GM18951 (cell line): ENCODE measurements at regions of chr7 and their contacts with region 1.

Region 1: GRCh38 chr7:98163704-98164494 is 47.3 kb upstream of the BHLHA15 start:
- POLR2A ChIP-seq: no peak

Region 2: DNA sequence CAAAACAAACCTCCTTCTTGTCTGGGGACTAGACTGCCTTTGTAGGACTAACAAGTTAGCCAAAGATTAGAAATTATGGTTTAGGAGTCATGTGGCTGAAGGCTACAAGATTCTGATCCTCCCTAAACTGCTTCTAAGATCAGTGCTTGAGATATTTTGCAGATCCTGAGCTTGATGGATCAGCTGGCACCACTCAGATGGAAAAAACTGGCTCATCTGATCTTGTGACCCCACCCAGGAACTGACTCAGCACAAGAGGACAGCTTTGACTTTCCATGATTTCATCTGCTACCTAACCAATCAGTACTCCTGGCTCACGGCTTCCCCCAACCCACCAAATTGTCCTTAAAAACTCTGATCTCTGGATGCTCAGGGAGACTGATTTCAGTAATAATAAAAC is 703.5 kb before region 1 on chr7:
- in situ Hi-C with region 1: no loop called
- POLR2A ChIP-seq: no peak

Region 3: GRCh38 chr7:98021588-98022351 is 142.1 kb before region 1 on chr7:
- in situ Hi-C with region 1: loop called (anchors 5 kb)
- POLR2A ChIP-seq: no peak

Region 4: DNA sequence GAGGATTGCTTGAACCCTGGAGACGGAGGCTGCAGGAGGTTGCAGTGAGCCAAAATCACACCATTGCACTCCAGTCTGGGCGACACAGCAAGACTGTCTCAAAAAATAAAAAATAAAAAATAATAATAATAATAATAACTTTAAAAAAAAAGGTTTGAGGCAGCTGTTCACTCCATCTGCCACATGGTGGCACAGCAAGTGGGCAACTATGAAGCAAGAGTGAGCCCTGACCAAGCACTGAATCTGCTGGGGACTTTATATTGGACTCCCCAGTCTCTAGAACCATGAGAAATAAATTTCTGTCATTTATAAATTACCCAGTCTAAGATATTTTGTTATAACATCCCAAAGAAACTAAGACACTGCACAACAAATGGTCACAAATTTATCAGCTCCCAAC is 102.9 kb after region 1 on chr7:
- in situ Hi-C with region 1: no loop called
- POLR2A ChIP-seq: no peak

Region 5: DNA sequence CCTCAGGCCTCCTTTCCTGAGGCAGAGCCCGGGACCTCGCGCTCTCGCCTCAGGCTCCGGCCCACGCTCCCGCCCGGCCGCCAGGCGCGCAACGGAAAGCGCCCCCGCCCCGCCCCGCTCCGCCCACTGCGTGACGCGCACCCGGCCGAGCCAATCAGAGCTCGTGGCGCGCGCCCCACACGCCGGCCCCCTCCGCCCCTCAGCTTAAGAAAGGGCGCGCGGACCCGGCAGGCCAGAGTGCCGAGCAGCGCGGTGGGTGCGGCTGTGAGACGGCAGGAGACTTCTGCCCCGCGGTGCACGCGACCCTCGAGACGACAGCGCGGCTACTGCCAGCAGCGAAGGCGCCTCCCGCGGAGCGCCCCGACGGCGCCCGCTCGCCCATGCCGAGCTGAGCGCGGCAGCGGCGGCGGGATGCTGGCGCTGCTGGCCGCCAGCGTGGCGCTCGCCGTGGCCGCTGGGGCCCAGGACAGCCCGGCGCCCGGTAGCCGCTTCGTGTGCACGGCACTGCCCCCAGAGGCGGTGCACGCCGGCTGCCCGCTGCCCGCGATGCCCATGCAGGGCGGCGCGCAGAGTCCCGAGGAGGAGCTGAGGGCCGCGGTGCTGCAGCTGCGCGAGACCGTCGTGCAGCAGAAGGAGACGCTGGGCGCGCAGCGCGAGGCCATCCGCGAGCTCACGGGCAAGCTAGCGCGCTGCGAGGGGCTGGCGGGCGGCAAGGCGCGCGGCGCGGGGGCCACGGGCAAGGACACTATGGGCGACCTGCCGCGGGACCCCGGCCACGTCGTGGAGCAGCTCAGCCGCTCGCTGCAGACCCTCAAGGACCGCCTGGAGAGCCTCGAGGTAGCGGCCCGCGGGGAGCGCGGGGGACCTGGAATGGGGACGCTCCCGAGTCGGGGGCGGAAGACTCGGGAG is 453.4 kb after region 1 on chr7 and contains the start of gene NPTX2:
- in situ Hi-C with region 1: no loop called
- POLR2A ChIP-seq: no peak

Region 6: DNA sequence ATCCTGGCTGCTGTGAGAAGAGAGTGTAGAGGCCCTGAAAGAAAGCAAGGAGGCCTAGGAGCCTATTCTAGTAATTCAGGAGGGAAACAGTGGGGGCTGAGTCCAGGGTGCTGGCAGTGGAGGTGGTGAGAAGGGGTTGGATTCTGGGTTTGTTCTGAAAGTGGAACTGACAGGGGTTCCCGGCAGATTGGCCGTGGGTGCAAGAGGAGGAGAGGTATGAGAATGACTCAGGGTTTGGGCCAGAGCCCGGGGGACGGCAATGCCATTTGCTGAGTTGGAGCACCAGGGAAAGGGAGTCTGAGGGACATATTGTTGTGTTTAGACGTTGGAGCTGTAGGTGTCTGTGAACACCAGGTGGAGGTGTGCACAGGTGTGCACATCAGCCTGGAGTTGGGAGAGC is 491.7 kb after region 1 on chr7:
- in situ Hi-C with region 1: no loop called
- POLR2A ChIP-seq: no peak